ENCODE measurements at regions of chr22 and their contacts with region 1.

Region 1: DNA sequence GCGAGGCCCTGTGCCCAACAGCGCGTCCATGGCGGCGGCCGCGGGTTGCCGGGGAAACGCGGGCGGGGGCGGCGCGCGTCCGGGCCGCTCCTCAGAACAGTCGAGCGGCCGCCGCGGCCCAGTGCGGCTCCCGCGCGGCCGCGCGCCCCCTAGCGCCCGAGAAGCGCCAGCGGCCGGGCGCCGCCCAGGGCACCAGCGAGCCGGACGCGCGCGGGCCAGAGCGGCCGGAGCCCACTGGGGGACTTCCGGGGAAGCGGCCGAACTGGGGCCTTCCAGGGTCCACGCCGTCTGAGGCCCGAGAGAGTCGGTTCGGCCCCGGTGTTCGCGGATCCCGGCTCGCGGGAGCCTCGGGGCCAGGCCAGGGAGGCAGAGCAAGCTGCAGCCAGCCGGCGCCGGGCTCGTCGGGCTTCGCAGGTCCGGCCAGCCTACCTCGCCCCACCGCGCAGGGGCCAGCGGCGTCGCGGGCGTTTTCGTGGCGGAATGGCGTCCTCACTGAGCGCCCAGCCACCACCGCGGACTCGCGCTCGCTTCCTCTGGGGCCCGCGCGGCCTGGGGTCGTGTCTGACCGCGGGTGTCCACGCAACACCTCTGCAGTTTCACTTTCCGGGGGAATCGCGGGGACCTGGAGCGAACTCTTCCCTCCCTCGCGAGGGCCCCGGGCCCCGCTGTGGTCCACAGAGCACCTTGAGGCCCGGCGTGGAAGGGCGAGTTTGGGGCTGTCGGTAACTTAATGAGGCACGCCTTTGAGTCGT is at the start of gene DENND6B:
- ATAC-seq: peak; percentile 91 to 98 (median 96)
- H3K4me3 ChIP-seq: peak within 1 kb of the TSS; percentile 59 to 89 (median 85)
- H3K27ac ChIP-seq: peak within 1 kb of the TSS; percentile 81 to 94
- H3K4me1 ChIP-seq: peaks cover 12 to 13% of the 10 kb centered on the region in 2 donors
- total RNA-seq, gene DENND6B: 1.7 to 15.3 (median 10.6) TPM

Region 2: GRCh38 chr22:50260801-50261614 is 66.1 kb before region 1 on chr22:
- in situ Hi-C with region 1: loop called in 1 of 9 experiments (anchors 10 kb)
- ATAC-seq: peak; percentile 40 to 80 (median 60)
- H3K4me3 ChIP-seq: peak overlapping the region; percentile 48 to 63 (median 56)
- H3K27ac ChIP-seq: peak overlapping the region; percentile 83 to 87
- H3K4me1 ChIP-seq: peaks cover 26 to 29% of the 10 kb centered on the region in 2 donors

Region 3: DNA sequence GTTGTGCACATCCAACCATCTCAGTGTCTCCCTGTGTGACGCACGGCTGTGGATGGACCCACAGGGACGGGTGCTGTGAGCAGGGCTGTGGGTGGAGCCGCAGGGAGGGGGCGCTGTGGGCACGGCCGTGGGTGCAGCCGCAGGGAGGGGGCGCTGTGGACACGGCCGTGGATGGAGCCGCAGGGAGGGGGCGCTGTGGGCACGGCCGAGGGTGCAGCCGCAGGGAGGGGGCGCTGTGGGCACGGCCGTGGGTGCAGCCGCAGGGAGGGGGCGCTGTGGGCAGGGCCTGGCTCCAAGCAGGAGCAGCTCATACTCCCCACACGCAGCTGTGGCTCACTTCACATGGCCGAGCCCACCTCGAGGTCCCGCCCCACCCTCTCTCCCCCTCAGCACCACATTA is 51.0 kb before region 1 on chr22:
- in situ Hi-C with region 1: loop called in 1 of 9 experiments (anchors 10 kb)
- ATAC-seq: peak in 3 of 8 experiments; percentile 6 to 22 (median 8)
- H3K4me3 ChIP-seq: no peak overlapping the region
- H3K27ac ChIP-seq: no peak overlapping the region
- H3K4me1 ChIP-seq: peaks cover 27 to 32% of the 10 kb centered on the region in 2 donors

Region 4: GRCh38 chr22:50423042-50423815 is 96.1 kb after region 1 on chr22:
- in situ Hi-C with region 1: no loop called
- ATAC-seq: no peak
- H3K4me3 ChIP-seq: no peak overlapping the region
- H3K27ac ChIP-seq: no peak overlapping the region
- H3K4me1 ChIP-seq: no peaks in the 10 kb centered on the region